ENCODE measurements at regions of chr19 and their contacts with region 1.

Region 1: DNA sequence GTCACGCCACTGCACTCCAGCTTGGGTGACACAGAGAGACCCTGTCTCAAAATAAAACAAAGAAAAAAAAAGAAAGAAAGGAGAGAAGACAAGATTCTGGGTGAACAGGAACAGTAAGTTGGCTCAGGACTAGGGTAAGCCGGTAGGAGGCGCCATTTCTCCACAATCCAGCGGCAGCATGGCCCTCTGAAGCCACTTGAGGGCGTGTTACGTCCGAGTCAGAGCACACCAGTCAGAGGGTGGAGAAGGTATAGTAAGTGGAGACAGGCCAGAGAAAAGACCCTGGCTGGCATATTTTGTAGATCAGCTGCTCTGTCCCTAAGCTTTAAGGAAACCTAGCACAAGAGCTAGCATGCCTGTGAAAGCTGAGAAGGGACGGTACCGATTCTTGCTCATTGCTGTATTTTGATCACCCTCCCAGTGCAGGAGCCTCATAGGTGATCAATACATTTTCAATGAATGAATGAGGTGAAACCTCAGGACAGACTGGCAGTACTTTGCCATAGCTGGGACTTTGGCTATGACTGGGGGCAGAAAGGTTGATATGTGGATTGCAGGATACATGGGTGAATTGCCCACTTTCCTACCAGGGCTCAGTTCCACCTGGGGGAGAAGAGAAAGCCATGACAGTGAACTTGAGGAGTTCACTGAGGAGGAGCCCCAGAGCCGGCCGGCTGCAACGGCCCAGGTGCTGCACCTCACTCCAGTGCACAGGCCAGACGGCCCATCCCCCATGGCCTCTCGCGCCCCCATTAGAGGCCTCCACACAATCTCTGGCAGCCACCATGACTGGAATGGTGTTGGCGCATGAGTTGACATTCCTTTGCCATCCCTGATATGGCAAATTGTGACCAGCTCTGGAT is 23.5 kb downstream of the POU2F2 start:
- DNase-seq: peak; percentile 82
- H3K4me3 Mint-ChIP-seq: no peak overlapping the region
- H3K27ac Mint-ChIP-seq: peak overlapping the region; percentile 8
- H3K4me1 Mint-ChIP-seq: peaks cover 35% of the 10 kb centered on the region
- H3K27me3 Mint-ChIP-seq: no peaks in the 10 kb centered on the region

Region 2: DNA sequence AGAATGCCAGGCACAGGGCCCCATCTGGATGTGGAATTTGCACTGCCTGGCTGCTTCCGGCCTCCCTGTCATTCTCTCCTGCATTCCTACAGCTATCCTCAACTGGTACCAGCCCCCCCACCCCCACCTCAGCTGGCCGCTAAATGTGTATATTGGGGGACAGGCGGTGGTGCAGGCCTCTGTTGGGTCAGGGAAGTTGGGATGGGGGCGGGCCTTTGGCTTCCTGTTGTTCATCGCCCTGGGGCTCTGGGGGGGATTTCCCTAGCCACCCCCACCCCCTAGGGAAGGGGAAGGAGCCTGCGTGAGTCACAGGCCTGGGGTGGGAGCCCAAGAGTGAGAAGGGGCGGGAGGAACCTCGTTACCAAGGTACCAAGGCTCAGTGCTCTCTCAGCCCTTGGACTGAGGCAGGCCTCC is 12.9 kb after region 1 on chr19:
- intact Hi-C with region 1: loop called (anchors 1 kb)
- DNase-seq: peak; percentile 57
- H3K4me3 Mint-ChIP-seq: peak overlapping the region; percentile 71
- H3K27ac Mint-ChIP-seq: peak overlapping the region; percentile 95
- H3K4me1 Mint-ChIP-seq: peaks cover 49% of the 10 kb centered on the region
- H3K27me3 Mint-ChIP-seq: no peaks in the 10 kb centered on the region

Region 3: GRCh38 chr19:42184401-42184861 is 75.7 kb after region 1 on chr19:
- intact Hi-C with region 1: loop called (anchors 1 kb)
- DNase-seq: peak; percentile 56
- H3K4me3 Mint-ChIP-seq: no peak overlapping the region
- H3K27ac Mint-ChIP-seq: peak overlapping the region; percentile 56
- H3K4me1 Mint-ChIP-seq: peaks cover 29% of the 10 kb centered on the region
- H3K27me3 Mint-ChIP-seq: peaks cover 14% of the 10 kb centered on the region

Region 4: DNA sequence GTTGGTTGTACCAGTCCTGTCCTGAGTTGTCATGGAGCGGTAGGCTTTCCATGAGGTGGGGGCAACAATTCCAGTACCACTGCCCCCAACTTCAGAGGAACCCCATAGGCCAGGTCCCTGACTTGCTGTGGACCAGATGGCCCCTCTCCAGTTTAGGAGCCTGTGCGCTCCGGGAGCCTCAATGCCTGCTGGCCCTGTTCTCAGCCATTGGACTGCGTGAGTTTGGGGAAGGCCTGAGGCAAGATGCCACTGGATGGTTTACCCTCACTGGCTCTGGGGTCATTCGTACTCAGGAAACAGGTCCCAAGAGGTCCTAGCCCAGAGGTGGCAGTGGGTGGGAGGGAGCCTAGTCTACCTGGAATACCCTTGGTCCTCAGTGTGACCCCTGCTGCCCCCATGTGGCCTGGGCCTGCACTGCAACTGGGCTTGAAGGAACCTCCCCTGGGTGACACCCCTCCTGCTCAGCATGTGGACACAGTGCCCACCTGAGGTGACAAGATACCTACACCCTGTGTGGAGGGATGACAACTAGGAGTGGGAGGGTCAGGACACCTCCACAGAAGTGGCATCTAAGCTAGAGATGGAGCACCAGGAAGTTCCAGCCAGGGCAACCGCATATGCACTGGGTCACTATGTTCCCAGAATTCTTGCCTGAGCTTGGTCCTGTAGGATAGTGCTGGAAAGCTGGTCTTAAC is 187.2 kb after region 1 on chr19:
- intact Hi-C with region 1: loop called (anchors 1 kb)
- DNase-seq: peak; percentile 80
- H3K4me3 Mint-ChIP-seq: no peak overlapping the region
- H3K27ac Mint-ChIP-seq: no peak overlapping the region
- H3K4me1 Mint-ChIP-seq: no peaks in the 10 kb centered on the region
- H3K27me3 Mint-ChIP-seq: no peaks in the 10 kb centered on the region

Region 5: DNA sequence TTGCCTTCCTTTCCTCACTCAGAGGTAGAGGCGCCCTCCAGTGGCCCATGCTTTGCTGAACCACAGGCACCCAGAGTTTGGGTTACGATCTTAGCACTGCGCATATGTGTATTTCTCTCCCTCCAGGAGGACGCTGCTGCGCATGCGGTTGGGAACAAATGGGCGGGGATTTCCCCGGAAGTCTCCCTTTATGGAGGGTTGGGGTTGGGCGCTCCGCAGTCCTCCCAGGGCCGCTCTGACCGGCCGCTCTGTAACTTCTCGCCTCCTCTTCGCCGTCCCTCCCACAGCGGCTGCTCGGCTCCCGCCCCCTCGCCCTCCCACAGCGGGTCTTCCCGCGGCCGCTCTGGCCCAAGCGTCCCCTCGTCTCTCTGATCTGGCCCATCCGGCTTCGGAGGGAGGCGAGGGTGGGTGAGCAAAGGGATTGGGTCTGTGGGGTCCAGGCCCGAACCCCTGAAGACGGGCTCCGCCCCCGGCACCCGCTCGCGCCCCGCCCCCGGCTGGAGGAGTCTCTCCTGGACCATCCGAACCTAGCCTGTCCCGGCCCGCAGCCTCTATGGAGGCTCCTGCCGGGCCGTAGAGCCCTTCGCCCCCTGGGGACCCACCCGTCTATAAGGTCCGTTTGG is 216.6 kb after region 1 on chr19 and contains the start of gene MEGF8:
- intact Hi-C with region 1: loop called (anchors 1 kb)
- DNase-seq: peak; percentile 98
- H3K4me3 Mint-ChIP-seq: peak within 1 kb of the TSS; percentile 87
- H3K27ac Mint-ChIP-seq: peak within 1 kb of the TSS; percentile 73
- H3K4me1 Mint-ChIP-seq: peaks cover 12% of the 10 kb centered on the region
- H3K27me3 Mint-ChIP-seq: peaks cover 25% of the 10 kb centered on the region
- total RNA-seq, gene MEGF8: 9.7 and 10.3 TPM in 2 replicates

Region 6: DNA sequence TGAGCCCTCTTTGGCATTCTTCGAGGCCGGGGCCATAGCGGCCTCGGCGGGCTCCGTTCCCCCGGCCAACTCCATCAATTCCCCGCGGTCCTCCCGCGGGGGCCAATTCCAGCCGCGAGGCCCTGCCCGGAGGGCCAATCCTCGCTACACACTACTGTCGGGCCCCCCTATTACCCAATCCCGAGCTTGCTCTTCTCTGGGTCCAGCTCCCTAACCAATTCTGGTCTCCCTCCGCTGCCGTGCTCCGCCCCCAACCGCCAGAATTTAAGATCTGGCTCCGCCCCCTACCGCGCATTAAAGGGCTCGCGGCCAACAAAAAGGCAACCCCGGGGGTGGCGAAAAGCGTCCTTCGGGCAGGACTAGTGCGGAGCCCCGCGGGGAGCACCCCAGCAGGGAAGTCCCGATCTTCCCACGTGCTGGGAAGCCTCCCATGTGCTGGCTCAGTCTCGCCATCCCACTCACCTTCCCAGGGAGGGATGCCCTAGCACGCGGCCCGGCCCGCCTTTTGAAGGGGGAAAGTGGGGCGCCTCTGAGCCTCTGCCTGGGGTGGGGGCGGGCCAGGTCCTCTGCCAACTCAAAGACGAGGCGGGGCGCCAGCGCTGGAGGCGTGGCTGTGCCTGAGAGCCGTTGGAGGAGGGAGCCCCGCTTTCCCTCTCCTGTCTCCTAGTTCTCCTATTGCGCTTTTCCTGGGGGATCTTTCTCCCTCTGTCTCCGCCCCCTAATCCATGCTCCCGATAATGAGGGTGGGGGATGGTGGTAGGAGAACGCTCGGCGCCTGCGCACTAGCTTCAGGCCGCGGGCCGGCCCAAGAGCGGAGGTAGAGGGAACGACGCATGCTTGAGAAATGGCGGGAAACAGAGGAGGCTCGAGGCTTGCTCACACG is 314.9 kb after region 1 on chr19:
- intact Hi-C with region 1: loop called (anchors 10 kb)
- DNase-seq: peak; percentile 94
- H3K4me3 Mint-ChIP-seq: peak overlapping the region; percentile 99
- H3K27ac Mint-ChIP-seq: peak overlapping the region; percentile 89
- H3K4me1 Mint-ChIP-seq: peaks cover 33% of the 10 kb centered on the region
- H3K27me3 Mint-ChIP-seq: peaks cover 2% of the 10 kb centered on the region

Measured in activated T-helper 2 cell treated with anti-CD3 and anti-CD28 coated beads, Interferon-gamma antibody, Interleukin-2, Interleukin-4, amounts not matched to agents 10 μg/mL and 5 μg/mL and 100 μg/mL, durations not matched to agents 14 hours and 24 hours and 36 hours (primary cell).